ENCODE measurements at regions of chr5 and their contacts with region 1.

Region 1: GRCh38 chr5:151141535-151141934 is 16.0 kb downstream of the ANXA6 start:
- DNase-seq: peak in 7 of 9 donors; percentile 39 to 62 (median 53)
- ATAC-seq: peak; percentile 80
- H3K4me3 ChIP-seq: peak overlapping the region; percentile 44
- H3K4me3 Mint-ChIP-seq: peak overlapping the region; percentile 68 to 96 (median 88)
- H3K27ac ChIP-seq: peak overlapping the region; percentile 67
- H3K27ac Mint-ChIP-seq: peak overlapping the region; percentile 81 to 99 (median 92)
- H3K4me1 ChIP-seq: peaks cover 85 to 88% of the 10 kb centered on the region in 2 donors
- H3K4me1 Mint-ChIP-seq: peaks cover 84 to 100% (median 96%) of the 10 kb centered on the region in 7 donors
- H3K27me3 ChIP-seq: no peaks in the 10 kb centered on the region
- H3K27me3 Mint-ChIP-seq: no peaks in the 10 kb centered on the region

Region 2: DNA sequence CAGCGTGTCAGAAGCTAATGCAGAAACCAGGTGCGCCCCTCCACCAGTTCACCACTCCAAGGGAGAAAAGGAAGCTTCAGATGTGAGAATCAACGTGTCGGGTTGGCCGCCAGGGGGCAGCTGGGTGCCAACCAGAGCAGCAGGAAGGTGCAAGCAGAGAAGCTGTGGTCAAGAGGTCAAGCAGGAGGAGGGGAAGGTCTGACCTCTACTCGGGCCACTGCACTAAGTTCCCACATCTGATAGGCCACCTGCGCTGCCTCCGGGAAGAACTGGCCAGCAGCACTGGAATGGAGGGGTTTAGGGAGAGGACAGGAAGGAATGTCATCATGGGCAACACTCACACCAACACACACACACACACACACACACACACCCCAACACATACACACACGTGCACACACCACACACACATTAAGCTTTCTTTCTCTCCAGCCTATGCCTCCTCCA is 15.3 kb before region 1 on chr5:
- CTCF ChIA-PET with region 1: interaction called, 86 read pairs
- POLR2A ChIA-PET with region 1: interaction called, 760 read pairs
- intact Hi-C with region 1: loop called in 1 of 2 experiments (anchors 1 kb)
- DNase-seq: peak; percentile 41 to 71 (median 64)
- ATAC-seq: peak; percentile 73
- H3K4me3 ChIP-seq: no peak overlapping the region
- H3K4me3 Mint-ChIP-seq: peak overlapping the region in 9 of 10 donors; percentile 22 to 84 (median 54)
- H3K27ac ChIP-seq: peak overlapping the region; percentile 72
- H3K27ac Mint-ChIP-seq: peak overlapping the region; percentile 68 to 99 (median 91)
- H3K4me1 ChIP-seq: peaks cover under 1 to 27% of the 10 kb centered on the region in 2 donors
- H3K4me1 Mint-ChIP-seq: peaks cover 32 to 75% (median 57%) of the 10 kb centered on the region in 7 donors
- H3K27me3 ChIP-seq: no peaks in the 10 kb centered on the region
- H3K27me3 Mint-ChIP-seq: no peaks in the 10 kb centered on the region

Measured in naive thymus-derived CD4-positive, alpha-beta T cell (primary cell).